Esophagus muscularis mucosa (tissue), 4 donors: ENCODE measurements at regions of chr6 and their contacts with region 1.

Region 1: DNA sequence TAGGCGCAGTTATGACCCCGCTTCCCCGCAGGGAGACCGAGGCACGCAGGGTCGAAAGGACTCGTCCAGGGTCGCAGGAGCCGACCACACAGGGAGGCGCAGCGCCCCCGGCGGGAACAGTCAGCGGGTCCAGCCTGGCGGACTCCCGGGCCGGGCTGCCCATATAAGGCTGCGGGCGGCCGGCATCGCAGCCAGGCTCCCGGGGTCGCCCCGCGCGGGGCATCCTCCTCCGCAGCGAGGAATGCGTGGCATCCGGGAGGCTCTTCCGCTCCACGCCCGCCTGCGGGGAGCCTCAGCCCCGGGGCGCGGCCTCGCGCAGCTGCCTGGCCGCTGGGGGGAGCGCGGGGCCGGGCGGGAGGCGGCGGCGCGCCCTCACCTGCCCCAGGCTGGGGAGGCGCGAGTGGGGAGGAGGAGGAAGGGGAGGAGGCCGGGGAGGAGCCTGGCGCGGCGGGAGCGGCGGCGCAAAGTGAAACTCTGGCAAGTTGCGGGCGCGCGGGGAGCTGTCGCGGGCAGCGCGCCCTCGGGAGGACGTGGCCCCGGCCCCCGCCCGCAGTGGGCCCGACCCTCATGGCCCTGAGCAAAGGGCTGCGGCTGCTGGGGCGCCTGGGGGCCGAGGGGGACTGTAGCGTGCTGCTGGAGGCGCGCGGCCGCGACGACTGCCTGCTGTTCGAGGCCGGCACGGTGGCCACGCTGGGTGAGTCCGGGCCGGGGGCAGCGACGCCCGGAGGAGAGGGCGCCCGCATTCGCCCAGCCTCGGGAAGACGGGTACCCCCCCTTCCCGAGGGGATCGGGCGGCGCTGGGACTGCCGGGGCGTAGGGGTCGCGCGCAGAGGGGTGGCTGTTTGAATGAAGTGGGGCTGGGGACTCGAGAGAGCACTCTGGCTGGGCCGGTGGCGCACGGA is at the start of gene SYNJ2:
- DNase-seq: no peak
- H3K4me3 ChIP-seq: peak within 1 kb of the TSS; percentile 90 to 99 (median 94)
- H3K27ac ChIP-seq: peak within 1 kb of the TSS; percentile 89 to 93 (median 90)
- H3K4me1 ChIP-seq: peaks cover 11 to 56% (median 51%) of the 10 kb centered on the region in 4 donors
- H3K27me3 ChIP-seq: peaks cover 0 to 5% (median 0%) of the 10 kb centered on the region in 4 donors
- CTCF ChIP-seq: peak; percentile 60 to 70 (median 68)
- EP300 ChIP-seq: no peak
- POLR2A ChIP-seq: no peak
- total RNA-seq, gene SYNJ2: 17.0 to 25.3 (median 25.1) TPM

Region 2: DNA sequence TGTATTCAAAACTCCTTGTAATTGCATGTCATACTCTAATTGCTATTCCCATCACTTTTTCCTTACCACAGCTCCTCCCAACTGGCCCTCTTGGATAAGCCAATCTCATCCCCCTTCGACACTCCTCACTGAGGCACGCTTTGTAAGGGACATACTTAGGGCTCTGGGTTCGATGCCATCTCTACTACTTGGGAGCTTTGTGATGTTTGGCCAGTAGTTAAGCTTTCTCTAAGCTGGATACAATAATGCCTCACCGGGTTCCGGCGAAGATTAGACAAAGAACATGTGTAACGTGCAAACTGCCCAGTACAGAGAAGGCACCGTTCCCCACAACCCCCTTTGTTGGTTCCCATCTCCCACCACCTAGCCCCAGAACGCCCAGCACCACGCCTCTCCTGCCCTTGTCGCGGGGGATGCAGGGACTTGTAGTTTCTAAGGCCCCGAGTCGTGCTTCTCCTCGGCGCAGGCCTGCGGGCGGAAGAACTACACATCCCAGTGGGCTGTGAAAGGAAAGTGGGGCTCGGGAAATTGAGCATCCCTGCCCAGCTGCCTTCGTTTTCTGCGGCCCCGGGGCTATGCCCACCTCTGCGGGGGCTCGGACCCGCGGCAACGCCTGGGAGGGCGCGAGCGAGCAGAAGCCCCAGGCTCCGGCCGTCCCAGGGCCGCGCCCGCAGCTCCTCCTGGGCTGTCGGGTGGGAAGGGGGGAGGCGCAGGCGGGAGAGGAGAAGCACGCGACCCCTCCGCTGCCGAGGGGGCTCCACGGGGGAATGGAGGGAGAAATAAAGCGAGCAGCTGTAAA is 601.8 kb before region 1 on chr6:
- intact Hi-C with region 1: no loop called
- DNase-seq: peak; percentile 98
- H3K4me3 ChIP-seq: peak overlapping the region; percentile 96 to 100 (median 98)
- H3K27ac ChIP-seq: peak overlapping the region; percentile 94 to 97 (median 96)
- H3K4me1 ChIP-seq: peaks cover 15 to 24% (median 20%) of the 10 kb centered on the region in 4 donors
- H3K27me3 ChIP-seq: no peaks in the 10 kb centered on the region
- CTCF ChIP-seq: no peak
- EP300 ChIP-seq: no peak
- POLR2A ChIP-seq: no peak

Region 3: GRCh38 chr6:157845493-157846259 is 136.0 kb before region 1 on chr6:
- intact Hi-C with region 1: no loop called
- DNase-seq: no peak
- H3K4me3 ChIP-seq: no peak overlapping the region
- H3K27ac ChIP-seq: no peak overlapping the region
- H3K4me1 ChIP-seq: peaks cover 53 to 95% (median 83%) of the 10 kb centered on the region in 4 donors
- H3K27me3 ChIP-seq: no peaks in the 10 kb centered on the region
- CTCF ChIP-seq: no peak
- EP300 ChIP-seq: no peak
- POLR2A ChIP-seq: no peak

Region 4: GRCh38 chr6:158060455-158061360 is 79.1 kb after region 1 on chr6:
- intact Hi-C with region 1: loop called (anchors 2 kb)
- DNase-seq: no peak
- H3K4me3 ChIP-seq: peak overlapping the region in 1 of 4 donors; percentile 20
- H3K27ac ChIP-seq: peak overlapping the region; percentile 57 to 82 (median 67)
- H3K4me1 ChIP-seq: peaks cover 19 to 30% (median 23%) of the 10 kb centered on the region in 4 donors
- H3K27me3 ChIP-seq: no peaks in the 10 kb centered on the region
- CTCF ChIP-seq: no peak
- EP300 ChIP-seq: no peak
- POLR2A ChIP-seq: no peak

Region 5: DNA sequence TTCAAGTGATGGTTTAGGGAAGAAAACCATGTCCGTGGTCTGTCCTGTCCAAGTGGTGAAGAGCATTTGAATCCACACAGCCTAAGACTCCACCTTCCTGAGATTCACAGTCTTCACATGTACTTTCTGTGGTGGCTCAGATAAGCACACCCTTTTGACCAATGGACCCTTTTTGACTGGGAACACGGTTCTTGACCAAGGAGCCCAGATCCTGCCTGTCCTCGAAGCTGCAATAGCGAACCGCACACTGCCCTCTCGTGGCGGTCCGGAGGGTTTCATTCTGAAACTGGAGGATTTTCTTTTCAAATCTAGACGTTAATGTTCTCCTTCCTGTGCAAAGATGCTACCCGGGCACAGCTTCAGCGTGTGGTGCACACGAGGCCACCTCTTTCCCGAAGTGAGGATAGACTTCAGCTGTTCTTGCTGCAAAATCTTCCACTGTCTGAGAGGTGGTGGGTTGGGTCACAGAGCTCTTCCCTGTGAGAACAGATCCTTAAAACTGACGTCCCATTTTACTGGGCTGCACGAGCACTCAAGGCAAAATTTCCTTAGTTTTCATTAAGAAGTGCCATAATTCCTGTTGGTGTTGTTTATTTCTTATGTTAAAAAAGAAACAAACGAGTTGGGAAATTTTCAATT is 90.6 kb after region 1 on chr6:
- intact Hi-C with region 1: loop called (anchors 2 kb)
- DNase-seq: no peak
- H3K4me3 ChIP-seq: no peak overlapping the region
- H3K27ac ChIP-seq: peak overlapping the region in 1 of 4 donors; percentile 27
- H3K4me1 ChIP-seq: peaks cover 4 to 30% (median 13%) of the 10 kb centered on the region in 4 donors
- H3K27me3 ChIP-seq: no peaks in the 10 kb centered on the region
- CTCF ChIP-seq: peak; percentile 78 to 87 (median 83)
- EP300 ChIP-seq: no peak
- POLR2A ChIP-seq: no peak

Region 6: GRCh38 chr6:158231551-158232315 is 250.1 kb after region 1 on chr6:
- intact Hi-C with region 1: no loop called
- DNase-seq: no peak
- H3K4me3 ChIP-seq: peak overlapping the region; percentile 74 to 97 (median 86)
- H3K27ac ChIP-seq: peak overlapping the region; percentile 85 to 94 (median 90)
- H3K4me1 ChIP-seq: peaks cover 10 to 25% (median 20%) of the 10 kb centered on the region in 4 donors
- H3K27me3 ChIP-seq: no peaks in the 10 kb centered on the region
- CTCF ChIP-seq: no peak
- EP300 ChIP-seq: no peak
- POLR2A ChIP-seq: no peak

Region 7: GRCh38 chr6:158605266-158605878 is 623.7 kb after region 1 on chr6:
- intact Hi-C with region 1: no loop called
- DNase-seq: no peak
- H3K4me3 ChIP-seq: no peak overlapping the region
- H3K27ac ChIP-seq: no peak overlapping the region
- H3K4me1 ChIP-seq: peaks cover 0 to 6% (median 2%) of the 10 kb centered on the region in 4 donors
- H3K27me3 ChIP-seq: no peaks in the 10 kb centered on the region
- CTCF ChIP-seq: peak; percentile 69 to 78 (median 74)
- EP300 ChIP-seq: no peak
- POLR2A ChIP-seq: no peak